ENCODE measurements at regions of chr7 and their contacts with region 1.

Region 1: GRCh38 chr7:95527033-95527775 is 41.5 kb downstream of the ASB4 start:
- DNase-seq: peak; percentile 42 to 71 (median 63)
- H3K4me3 ChIP-seq: no peak overlapping the region
- H3K27ac ChIP-seq: no peak overlapping the region
- H3K4me1 ChIP-seq: peaks cover 0 to 10% (median 5%) of the 10 kb centered on the region in 4 experiments
- H3K27me3 ChIP-seq: no peaks in the 10 kb centered on the region

Region 2: GRCh38 chr7:95511716-95512260 is 15.4 kb before region 1 on chr7:
- CTCF ChIA-PET with region 1: interaction called, 37 read pairs
- POLR2A ChIA-PET with region 1: no interaction called
- DNase-seq: peak; percentile 88 to 94 (median 93)
- H3K4me3 ChIP-seq: peak overlapping the region in 2 of 7 experiments; percentile 14 to 16
- H3K27ac ChIP-seq: no peak overlapping the region
- H3K4me1 ChIP-seq: peaks cover 0 to 20% (median 9%) of the 10 kb centered on the region in 4 experiments
- H3K27me3 ChIP-seq: no peaks in the 10 kb centered on the region

Region 3: GRCh38 chr7:95545078-95545498 is 17.9 kb after region 1 on chr7:
- CTCF ChIA-PET with region 1: interaction called, 15 read pairs
- POLR2A ChIA-PET with region 1: no interaction called
- DNase-seq: peak; percentile 16 to 42 (median 33)
- H3K4me3 ChIP-seq: peak overlapping the region in 1 of 7 experiments; percentile 41
- H3K27ac ChIP-seq: no peak overlapping the region
- H3K4me1 ChIP-seq: peaks cover 0 to 3% (median 0%) of the 10 kb centered on the region in 4 experiments
- H3K27me3 ChIP-seq: no peaks in the 10 kb centered on the region

Measured in common myeloid progenitor, CD34-positive (primary cell).